ENCODE measurements at regions of chr17 and their contacts with region 1.

Region 1: GRCh38 chr17:19377602-19378392 is 501 bp upstream of the MAPK7 start:
- DNase-seq: peak; percentile 98 to 99
- H3K4me3 ChIP-seq: peak overlapping the region; percentile 62 to 98
- H3K27ac ChIP-seq: peak overlapping the region; percentile 93 to 97
- H3K4me1 ChIP-seq: peaks cover 5 to 6% of the 10 kb centered on the region in 2 donors
- H3K27me3 ChIP-seq: no peaks in the 10 kb centered on the region
- CTCF ChIP-seq: peak in 2 of 4 experiments; percentile 20 to 21
- POLR2A ChIP-seq: peak; percentile 54 to 78

Region 2: GRCh38 chr17:19424934-19425868 is 47.4 kb after region 1 on chr17:
- intact Hi-C with region 1: no loop called
- DNase-seq: no peak
- H3K4me3 ChIP-seq: no peak overlapping the region
- H3K27ac ChIP-seq: peak overlapping the region; percentile 78 to 82
- H3K4me1 ChIP-seq: no peaks in the 10 kb centered on the region
- H3K27me3 ChIP-seq: no peaks in the 10 kb centered on the region
- CTCF ChIP-seq: no peak
- POLR2A ChIP-seq: no peak

Region 3: GRCh38 chr17:19447085-19447583 is 69.3 kb after region 1 on chr17:
- intact Hi-C with region 1: loop called (anchors 10 kb)
- DNase-seq: peak; percentile 70 to 90
- H3K4me3 ChIP-seq: no peak overlapping the region
- H3K27ac ChIP-seq: peak overlapping the region; percentile 86 to 94
- H3K4me1 ChIP-seq: peaks cover 7 to 15% of the 10 kb centered on the region in 2 donors
- H3K27me3 ChIP-seq: no peaks in the 10 kb centered on the region
- CTCF ChIP-seq: peak; percentile 95 to 98 (median 97)
- POLR2A ChIP-seq: no peak

Region 4: DNA sequence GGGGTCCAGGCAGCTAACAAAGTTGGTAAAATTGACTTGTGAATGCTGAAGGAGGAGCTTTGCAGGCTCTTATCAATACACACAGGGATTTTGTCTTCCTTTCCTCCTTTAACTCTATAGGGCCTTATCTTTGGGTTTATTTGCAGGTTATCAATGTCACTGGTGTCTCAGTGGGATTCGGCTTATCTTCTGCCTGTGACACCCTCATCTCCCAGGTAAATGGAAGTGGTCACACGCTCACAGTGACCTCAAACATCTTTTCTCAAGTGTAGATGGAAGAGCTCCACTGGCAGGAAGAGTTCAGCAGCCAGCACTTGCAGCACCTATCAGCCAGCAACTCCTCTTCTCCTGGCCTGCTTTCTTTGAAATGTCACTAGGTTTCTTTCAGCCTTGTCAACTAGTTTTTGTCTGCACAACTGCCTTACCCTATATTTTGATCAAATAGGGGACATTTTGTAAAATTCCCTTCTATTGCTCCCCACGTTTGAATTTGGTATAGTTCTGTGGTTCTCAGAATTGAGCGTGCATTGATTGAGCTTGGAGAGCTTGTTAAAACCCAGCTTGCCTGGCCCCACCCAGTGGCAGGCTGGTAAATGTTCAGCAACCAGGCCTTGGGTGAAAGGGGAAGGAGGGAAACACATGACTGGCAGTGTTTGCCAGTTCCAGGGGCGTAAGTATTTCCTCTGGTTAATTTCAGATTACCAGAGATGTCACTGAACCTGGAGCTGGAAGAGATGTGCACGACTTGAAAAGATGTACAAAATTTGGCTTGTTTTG is 168.7 kb after region 1 on chr17:
- intact Hi-C with region 1: no loop called
- DNase-seq: no peak
- H3K4me3 ChIP-seq: no peak overlapping the region
- H3K27ac ChIP-seq: peak overlapping the region in 1 of 2 donors; percentile 35
- H3K4me1 ChIP-seq: no peaks in the 10 kb centered on the region
- H3K27me3 ChIP-seq: no peaks in the 10 kb centered on the region
- CTCF ChIP-seq: peak in 1 of 4 experiments; percentile 16
- POLR2A ChIP-seq: no peak